ENCODE measurements at regions of chr1 and their contacts with region 1.

Region 1: DNA sequence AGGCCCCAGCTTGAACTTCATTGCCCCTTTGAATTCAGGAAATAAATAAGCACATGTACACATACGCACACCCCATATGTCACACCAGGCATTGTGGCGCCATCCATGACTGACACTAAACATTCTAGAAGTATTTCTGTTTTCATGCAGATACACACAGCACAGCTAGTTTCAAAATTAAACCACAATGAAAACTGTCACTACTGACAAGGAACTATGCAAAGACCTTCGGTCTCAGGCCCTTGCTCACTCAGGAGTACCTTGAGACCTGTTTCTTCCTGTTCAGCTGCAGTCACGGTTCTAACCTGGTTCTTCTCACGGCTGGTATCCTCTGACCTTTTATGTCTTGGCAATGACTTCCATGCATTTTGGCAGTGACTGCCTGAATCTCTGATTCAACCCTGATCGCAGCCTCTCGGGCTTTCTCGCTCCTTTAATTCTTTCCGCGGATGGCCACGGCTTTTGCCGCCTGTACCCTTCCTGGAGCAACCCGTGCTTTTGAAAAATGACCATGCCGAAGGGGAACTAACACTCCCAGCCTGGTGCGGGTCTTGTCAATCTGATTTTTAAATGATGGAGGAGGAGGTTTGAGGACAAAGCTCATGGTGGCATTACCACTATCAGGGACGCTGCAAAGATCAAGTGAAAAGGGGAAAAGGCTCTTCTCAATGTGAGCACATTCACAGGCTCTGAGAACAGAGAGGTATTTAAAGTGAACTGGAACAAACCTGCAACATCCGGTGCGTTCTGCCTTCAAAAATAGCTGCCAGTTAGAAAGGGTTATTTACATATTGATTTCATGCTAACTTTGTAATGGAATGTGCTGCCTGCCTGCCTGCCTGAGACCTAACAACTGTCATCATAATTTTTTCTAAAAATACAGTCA is 384.6 kb downstream of the RRAGC start:
- DNase-seq: peak; percentile 44
- ATAC-seq: peak; percentile 81
- H3K4me3 Mint-ChIP-seq: peak overlapping the region; percentile 91
- H3K27ac Mint-ChIP-seq: peak overlapping the region; percentile 98
- H3K4me1 Mint-ChIP-seq: peaks cover 67% of the 10 kb centered on the region
- H3K27me3 Mint-ChIP-seq: no peaks in the 10 kb centered on the region
- CTCF ChIP-seq: no peak

Region 2: GRCh38 chr1:38026592-38027200 is 448.3 kb before region 1 on chr1:
- CTCF ChIA-PET with region 1: interaction called, 3 read pairs
- POLR2A ChIA-PET with region 1: interaction called, 9 read pairs
- intact Hi-C with region 1: loop called (anchors 1 kb)
- DNase-seq: no peak
- ATAC-seq: no peak
- H3K4me3 Mint-ChIP-seq: no peak overlapping the region
- H3K27ac Mint-ChIP-seq: no peak overlapping the region
- H3K4me1 Mint-ChIP-seq: peaks cover 39% of the 10 kb centered on the region
- H3K27me3 Mint-ChIP-seq: no peaks in the 10 kb centered on the region
- CTCF ChIP-seq: no peak

Region 3: GRCh38 chr1:38102636-38103035 is 372.3 kb before region 1 on chr1:
- CTCF ChIA-PET with region 1: no interaction called
- POLR2A ChIA-PET with region 1: no interaction called
- intact Hi-C with region 1: no loop called
- DNase-seq: no peak
- ATAC-seq: no peak
- H3K4me3 Mint-ChIP-seq: no peak overlapping the region
- H3K27ac Mint-ChIP-seq: no peak overlapping the region
- H3K4me1 Mint-ChIP-seq: peaks cover 5% of the 10 kb centered on the region
- H3K27me3 Mint-ChIP-seq: no peaks in the 10 kb centered on the region
- CTCF ChIP-seq: no peak

Region 4: DNA sequence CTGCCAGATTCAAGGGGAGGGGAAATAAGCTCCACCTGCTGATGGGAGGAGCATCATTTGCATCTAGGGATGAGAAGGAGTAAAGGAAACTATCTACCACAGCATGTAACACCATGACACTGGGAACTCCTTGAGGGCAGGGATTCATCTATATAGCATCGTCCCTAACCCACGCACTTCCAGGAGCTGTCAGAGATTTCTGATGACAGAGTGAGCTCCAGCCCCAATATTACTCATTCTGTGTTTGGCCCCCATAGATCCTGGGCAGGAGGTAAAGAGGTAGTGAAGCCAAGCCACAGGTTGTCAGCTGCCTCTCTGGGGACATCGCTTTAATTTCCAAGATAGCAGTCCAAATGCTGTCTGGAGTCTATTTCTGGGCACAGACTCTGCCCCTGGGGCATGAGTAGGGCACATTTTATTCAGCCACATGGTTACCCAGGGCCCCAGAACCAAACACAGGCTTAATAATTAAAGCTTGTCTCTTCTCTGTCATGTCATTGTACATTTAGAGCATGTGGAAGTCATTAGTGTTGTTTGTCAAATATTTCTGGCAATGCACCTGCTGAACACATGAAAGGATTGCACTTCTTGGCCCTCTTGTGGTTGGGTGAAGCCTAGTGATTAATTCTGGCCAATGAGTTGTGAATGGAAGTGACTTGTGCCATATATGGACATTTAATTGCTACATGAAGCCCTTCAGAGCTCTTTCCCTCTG is 322.5 kb before region 1 on chr1:
- CTCF ChIA-PET with region 1: interaction called, 3 read pairs
- POLR2A ChIA-PET with region 1: interaction called, 33 read pairs
- intact Hi-C with region 1: loop called (anchors 2 kb)
- DNase-seq: no peak
- ATAC-seq: peak; percentile 74
- H3K4me3 Mint-ChIP-seq: peak overlapping the region; percentile 4
- H3K27ac Mint-ChIP-seq: peak overlapping the region; percentile 80
- H3K4me1 Mint-ChIP-seq: peaks cover 43% of the 10 kb centered on the region
- H3K27me3 Mint-ChIP-seq: no peaks in the 10 kb centered on the region
- CTCF ChIP-seq: no peak

Region 5: DNA sequence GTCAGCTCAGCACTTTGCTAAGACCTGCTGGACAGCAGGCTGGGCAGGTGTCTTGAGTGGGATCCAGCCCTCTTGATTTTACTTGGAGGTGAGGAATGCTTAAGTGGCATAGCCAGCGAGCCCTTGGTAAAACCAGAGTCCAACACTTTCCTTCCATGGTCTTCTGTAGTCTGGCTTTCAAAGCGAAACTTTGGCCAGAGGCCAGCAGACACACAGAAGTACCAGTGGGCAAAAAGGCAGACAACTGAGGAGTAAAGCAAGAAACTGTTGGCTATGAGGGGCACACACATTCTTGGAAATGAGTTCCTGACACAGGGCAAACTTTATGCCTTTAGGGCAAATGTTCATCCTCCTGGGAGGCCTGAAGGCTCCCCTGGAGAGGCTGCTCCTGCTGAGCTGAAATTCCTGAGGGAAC is 147.4 kb before region 1 on chr1:
- CTCF ChIA-PET with region 1: no interaction called
- POLR2A ChIA-PET with region 1: no interaction called
- intact Hi-C with region 1: no loop called
- DNase-seq: no peak
- ATAC-seq: no peak
- H3K4me3 Mint-ChIP-seq: no peak overlapping the region
- H3K27ac Mint-ChIP-seq: no peak overlapping the region
- H3K4me1 Mint-ChIP-seq: no peaks in the 10 kb centered on the region
- H3K27me3 Mint-ChIP-seq: peaks cover 7% of the 10 kb centered on the region
- CTCF ChIP-seq: no peak

Region 6: DNA sequence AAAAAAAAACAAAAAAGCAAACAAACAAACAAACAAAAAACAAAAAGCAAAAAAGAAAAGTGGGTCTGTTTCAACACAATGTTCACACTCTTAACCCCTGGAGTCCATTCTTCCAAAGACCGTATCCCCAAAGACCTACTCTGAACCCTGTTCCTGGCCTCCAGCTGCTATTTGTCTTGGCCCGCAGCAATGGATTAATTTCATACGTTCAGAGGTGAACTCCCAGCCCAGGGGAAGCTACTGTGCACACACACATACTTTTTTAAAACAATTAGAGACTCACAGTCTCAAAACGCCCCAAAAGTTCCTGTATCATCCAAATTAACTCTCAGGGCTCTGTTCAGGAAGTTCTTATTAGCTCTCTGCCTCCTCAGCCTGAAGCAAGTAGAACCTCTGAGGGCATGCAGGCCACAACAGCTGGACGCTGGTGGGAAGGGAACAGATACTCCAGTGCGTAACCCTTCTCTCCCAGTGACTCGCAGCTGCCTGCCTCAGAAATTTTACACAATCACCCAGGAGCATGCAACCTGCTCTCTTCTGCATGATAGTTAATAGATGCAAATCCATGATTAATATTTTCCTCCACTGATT is 10.8 kb before region 1 on chr1:
- CTCF ChIA-PET with region 1: no interaction called
- POLR2A ChIA-PET with region 1: interaction called, 16 read pairs
- intact Hi-C with region 1: no loop called
- DNase-seq: no peak
- ATAC-seq: no peak
- H3K4me3 Mint-ChIP-seq: no peak overlapping the region
- H3K27ac Mint-ChIP-seq: no peak overlapping the region
- H3K4me1 Mint-ChIP-seq: peaks cover 4% of the 10 kb centered on the region
- H3K27me3 Mint-ChIP-seq: no peaks in the 10 kb centered on the region
- CTCF ChIP-seq: no peak

Region 7: DNA sequence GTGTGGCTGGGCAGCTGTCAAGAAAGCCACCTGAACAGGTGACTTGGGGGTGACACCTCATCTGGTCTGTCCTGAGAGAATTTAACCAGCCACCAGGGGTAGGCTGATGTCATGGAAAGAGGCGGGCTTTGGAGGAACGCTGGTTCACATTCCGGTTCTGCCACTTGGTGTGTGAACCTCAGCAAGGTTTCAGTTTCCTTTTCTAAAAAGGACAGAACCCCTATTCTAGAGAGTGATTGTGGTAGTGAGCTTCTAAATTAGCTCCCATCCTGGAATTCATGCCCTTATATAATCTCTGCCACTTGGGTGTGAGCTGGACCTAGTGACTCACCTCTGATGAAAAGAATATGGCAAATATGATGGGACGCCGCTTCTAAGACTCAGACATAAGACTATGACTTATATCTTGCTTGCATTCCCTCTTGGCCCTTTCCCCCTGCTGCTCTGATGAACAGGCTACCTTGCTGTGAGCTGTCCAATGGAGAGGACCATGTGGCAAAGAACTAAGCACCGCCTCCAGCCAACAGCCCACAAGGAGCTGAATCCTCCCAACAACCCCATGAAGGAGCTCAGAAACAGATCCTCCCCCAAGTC is 52.5 kb after region 1 on chr1:
- CTCF ChIA-PET with region 1: no interaction called
- POLR2A ChIA-PET with region 1: interaction called, 6 read pairs
- intact Hi-C with region 1: loop called (anchors 2 kb)
- DNase-seq: peak; percentile 34
- ATAC-seq: peak; percentile 75
- H3K4me3 Mint-ChIP-seq: peak overlapping the region; percentile 66
- H3K27ac Mint-ChIP-seq: peak overlapping the region; percentile 27
- H3K4me1 Mint-ChIP-seq: peaks cover 14% of the 10 kb centered on the region
- H3K27me3 Mint-ChIP-seq: peaks cover 14% of the 10 kb centered on the region
- CTCF ChIP-seq: no peak

Region 8: DNA sequence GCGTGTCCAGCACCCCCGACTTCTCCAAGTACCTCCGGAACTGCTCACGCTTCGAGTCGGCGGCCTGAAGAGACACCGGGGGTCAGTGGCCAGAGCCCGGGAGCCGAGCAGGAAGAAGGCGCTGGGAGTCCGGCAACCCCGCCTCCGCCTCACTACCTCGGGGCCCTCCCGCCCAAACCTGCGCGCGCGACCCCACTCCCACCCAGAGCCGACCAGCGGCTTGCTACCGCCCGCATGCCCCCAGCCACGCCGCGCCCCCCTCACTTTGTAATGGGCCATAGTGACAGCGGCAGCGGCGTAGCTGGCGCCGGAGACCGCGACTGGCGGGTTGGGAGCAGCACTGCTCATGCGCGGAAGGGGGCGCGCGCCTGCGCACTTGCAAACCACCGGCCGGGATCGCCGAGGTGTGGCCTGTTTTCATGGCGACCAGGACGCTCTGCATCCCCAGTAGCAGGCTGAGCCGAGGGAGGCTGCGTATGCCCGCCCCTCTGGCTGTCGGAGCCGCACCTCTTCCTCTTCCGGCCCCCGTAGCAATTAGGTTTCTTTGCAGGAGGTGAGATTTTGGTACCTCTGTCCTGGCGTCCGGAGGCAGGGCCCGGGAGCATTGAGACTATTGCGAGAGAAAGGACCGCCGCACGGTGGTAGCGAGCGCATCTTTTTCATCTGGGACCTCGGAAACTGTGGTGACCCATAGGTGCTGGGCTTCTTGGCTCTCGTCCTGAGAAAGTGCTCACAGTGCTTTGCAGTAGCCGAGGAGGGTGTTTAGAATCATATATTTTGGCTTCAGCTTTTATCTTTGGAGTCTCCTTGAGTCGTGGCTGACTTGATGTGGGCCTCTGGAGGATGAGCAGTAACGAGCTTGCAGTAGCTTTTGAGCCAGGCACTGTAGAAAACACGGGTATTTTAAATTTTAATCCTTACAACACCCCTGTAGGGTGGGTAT is 398.3 kb after region 1 on chr1 and contains the start of gene MYCBP:
- CTCF ChIA-PET with region 1: no interaction called
- POLR2A ChIA-PET with region 1: no interaction called
- intact Hi-C with region 1: loop called (anchors 1 kb)
- DNase-seq: peak; percentile 97
- ATAC-seq: peak; percentile 99
- H3K4me3 Mint-ChIP-seq: peak within 1 kb of the TSS; percentile 92
- H3K27ac Mint-ChIP-seq: peak within 1 kb of the TSS; percentile 83
- H3K4me1 Mint-ChIP-seq: peaks cover 23% of the 10 kb centered on the region
- H3K27me3 Mint-ChIP-seq: no peaks in the 10 kb centered on the region
- CTCF ChIP-seq: no peak
- total RNA-seq, gene MYCBP: 18.6 and 19.2 TPM in 2 replicates

Measured in activated B cell treated with CpG ODN at 0.5 μM for 24 hours (primary cell).